ENCODE measurements at regions of chr19 and their contacts with region 1.

Region 1: DNA sequence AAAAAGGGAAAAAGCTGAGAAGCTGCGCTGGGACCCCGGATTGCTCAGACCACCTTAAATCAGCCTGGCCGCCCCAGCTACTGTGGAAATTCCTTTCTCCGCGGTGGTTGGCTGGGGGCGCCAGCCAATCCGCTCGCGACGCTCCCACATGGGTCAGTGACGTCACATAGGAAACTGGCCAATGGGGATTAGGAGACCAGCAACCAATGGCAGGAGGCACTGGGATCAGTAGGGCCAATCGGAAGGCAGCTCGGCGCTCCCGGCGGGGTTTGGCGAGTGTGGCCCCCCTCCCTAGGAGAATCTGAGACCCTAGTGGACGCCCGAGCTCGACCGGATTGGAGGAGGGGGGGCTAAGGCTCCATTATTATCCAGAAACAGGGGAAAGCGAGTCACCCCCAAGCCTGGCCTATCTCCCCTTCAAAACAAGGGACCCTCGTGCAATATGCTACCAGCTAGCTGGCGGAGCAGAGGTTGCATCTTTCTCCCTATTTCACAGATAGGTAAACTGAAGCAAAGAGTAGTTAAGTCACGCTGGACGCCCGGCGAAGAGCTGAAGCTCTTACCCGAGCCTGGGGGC is 6.5 kb upstream of the TLE2 start:
- DNase-seq: peak; percentile 97

Region 2: GRCh38 chr19:2977001-2977685 is 58.5 kb before region 1 on chr19 and contains the start of gene TLE6:
- intact Hi-C with region 1: loop called (anchors 1 kb)
- DNase-seq: peak; percentile 96
- total RNA-seq, gene TLE6: 1.0 TPM

Region 3: GRCh38 chr19:3053218-3053699 is 17.6 kb after region 1 on chr19:
- intact Hi-C with region 1: no loop called
- DNase-seq: no peak

Region 4: GRCh38 chr19:3075895-3076431 is 40.3 kb after region 1 on chr19:
- intact Hi-C with region 1: no loop called
- DNase-seq: peak; percentile 87

Region 5: GRCh38 chr19:3094601-3095437 is 59.2 kb after region 1 on chr19:
- intact Hi-C with region 1: loop called (anchors 2 kb)
- DNase-seq: no peak